PC-9 (cell line): ENCODE measurements at regions of chr11 and their contacts with region 1.

Region 1: DNA sequence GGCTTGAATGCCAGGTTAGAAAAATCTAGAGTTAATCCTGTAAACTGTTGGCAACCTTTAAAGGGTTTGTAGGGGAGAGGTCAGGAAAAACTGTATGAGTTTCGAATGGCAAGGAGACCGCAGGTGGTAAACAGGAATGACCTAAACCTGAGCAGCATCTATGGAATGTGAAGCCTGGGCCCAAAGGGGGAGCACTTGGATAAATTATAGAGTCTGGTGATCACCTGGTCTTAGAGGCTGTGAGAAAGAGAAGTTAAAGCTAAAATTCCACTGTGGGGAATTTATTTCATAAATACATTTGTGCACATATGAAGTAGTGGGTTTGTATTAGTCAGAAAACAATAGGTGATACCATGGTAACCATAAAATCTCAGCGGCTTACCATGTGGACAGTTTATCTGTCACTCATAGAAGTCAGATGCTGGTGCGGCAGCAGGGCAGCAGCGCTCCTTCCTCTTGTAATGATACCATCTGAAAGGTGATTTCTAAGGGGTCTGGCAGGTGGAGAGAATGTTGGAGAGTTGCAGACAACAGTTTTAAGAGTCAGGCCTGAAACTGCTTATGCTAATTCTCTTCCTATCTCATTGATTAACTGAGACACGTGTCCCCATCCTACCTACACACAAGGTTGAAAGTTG is 1104.4 kb upstream of the CCDC90B start:
- DNase-seq: peak; percentile 13 to 41
- H3K4me3 ChIP-seq: no peak overlapping the region
- H3K27ac ChIP-seq: no peak overlapping the region
- H3K4me1 ChIP-seq: no peaks in the 10 kb centered on the region
- H3K27me3 ChIP-seq: no peaks in the 10 kb centered on the region
- CTCF ChIP-seq: 0 out of 2 replicates have a peak, but pooled peaks have one; percentile 35

Region 2: GRCh38 chr11:84524422-84525051 is 134.0 kb after region 1 on chr11:
- CTCF ChIA-PET with region 1: interaction called, 4 read pairs
- POLR2A ChIA-PET with region 1: no interaction called
- intact Hi-C with region 1: loop called (anchors 2 kb)
- DNase-seq: no peak
- H3K4me3 ChIP-seq: no peak overlapping the region
- H3K27ac ChIP-seq: no peak overlapping the region
- H3K4me1 ChIP-seq: no peaks in the 10 kb centered on the region
- H3K27me3 ChIP-seq: no peaks in the 10 kb centered on the region; the same call in 1 of the 2 replicates
- CTCF ChIP-seq: peak; percentile 68

Region 3: GRCh38 chr11:84564180-84564866 is 173.8 kb after region 1 on chr11:
- CTCF ChIA-PET with region 1: no interaction called
- POLR2A ChIA-PET with region 1: no interaction called
- intact Hi-C with region 1: no loop called
- DNase-seq: peak in 1 of 2 experiments; percentile 15
- H3K4me3 ChIP-seq: no peak overlapping the region
- H3K27ac ChIP-seq: no peak overlapping the region
- H3K4me1 ChIP-seq: no peaks in the 10 kb centered on the region
- H3K27me3 ChIP-seq: no peaks in the 10 kb centered on the region
- CTCF ChIP-seq: peak; percentile 94